ENCODE measurements at regions of chr19 and their contacts with region 1.

Region 1: GRCh38 chr19:11694533-11695439 is 44.0 kb downstream of the ZNF823 start:
- DNase-seq: peak; percentile 97
- H3K4me3 ChIP-seq: peak overlapping the region; percentile 66 to 79 (median 76)
- H3K27ac ChIP-seq: peak overlapping the region; percentile 61 to 75 (median 74)
- H3K4me1 ChIP-seq: peaks cover 0 to 13% (median 10%) of the 10 kb centered on the region in 4 donors
- H3K27me3 ChIP-seq: no peaks in the 10 kb centered on the region
- CTCF ChIP-seq: no peak
- EP300 ChIP-seq: no peak
- POLR2A ChIP-seq: peak in 1 of 2 donors; percentile 39

Region 2: GRCh38 chr19:11766597-11767591 is 72.1 kb after region 1 on chr19 and contains the start of gene ZNF441:
- intact Hi-C with region 1: loop called (anchors 2 kb)
- DNase-seq: peak; percentile 98
- H3K4me3 ChIP-seq: peak within 1 kb of the TSS; percentile 73 to 87 (median 80)
- H3K27ac ChIP-seq: peak within 1 kb of the TSS; percentile 87 to 95 (median 94)
- H3K4me1 ChIP-seq: peaks cover 0 to 19% (median 16%) of the 10 kb centered on the region in 4 donors
- H3K27me3 ChIP-seq: no peaks in the 10 kb centered on the region
- CTCF ChIP-seq: no peak
- EP300 ChIP-seq: peak in 2 of 4 donors; percentile 6 to 74
- POLR2A ChIP-seq: peak; percentile 73 to 76
- total RNA-seq, gene ZNF441: 8.4 to 10.5 (median 8.8) TPM

Measured in sigmoid colon (tissue), 7 donors.